ENCODE measurements at regions of chr1 and their contacts with region 1.

Region 1: GRCh38 chr1:112390775-112391602 is 5.0 kb upstream of the CTTNBP2NL start:
- DNase-seq: peak in 3 of 4 donors; percentile 86 to 94 (median 87)
- ATAC-seq: peak; percentile 91
- H3K4me3 ChIP-seq: peak overlapping the region; percentile 37 to 38
- H3K27ac ChIP-seq: peak overlapping the region; percentile 80 to 81
- H3K4me1 ChIP-seq: peaks cover 24 to 48% of the 10 kb centered on the region in 2 donors
- H3K27me3 ChIP-seq: no peaks in the 10 kb centered on the region
- CTCF ChIP-seq: peak; percentile 89 to 95

Region 2: DNA sequence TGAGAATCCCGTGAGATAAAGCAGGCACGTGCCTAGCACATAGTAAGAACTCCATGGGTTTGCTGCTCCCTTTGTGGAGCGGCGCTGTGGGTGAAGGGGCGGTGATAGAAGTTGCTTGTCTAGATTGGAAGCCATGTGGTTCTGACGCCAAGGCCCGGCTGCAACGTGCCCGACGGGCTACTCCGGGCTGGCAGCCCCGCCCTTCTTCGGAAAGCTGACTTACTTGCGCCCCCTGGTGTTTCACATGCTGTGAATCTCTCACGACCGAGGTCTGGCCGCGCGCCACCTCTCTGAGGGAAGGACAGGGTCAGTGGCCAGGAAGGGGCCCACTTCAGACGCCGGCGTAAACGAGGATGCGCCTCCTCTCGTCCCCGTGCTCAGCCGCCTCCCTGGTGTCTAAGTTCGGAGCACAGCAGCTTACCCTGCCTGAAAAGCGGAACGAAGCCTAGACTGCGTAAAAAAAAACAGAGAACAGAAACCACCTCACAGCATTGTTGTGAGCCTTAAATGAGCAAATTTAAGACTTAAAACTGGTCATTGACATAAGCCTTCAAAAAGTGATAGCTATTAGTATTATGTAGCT is 75.2 kb after region 1 on chr1:
- intact Hi-C with region 1: loop called (anchors 5 to 10 kb)
- DNase-seq: peak; percentile 93 to 97 (median 95)
- ATAC-seq: peak; percentile 85
- H3K4me3 ChIP-seq: peak overlapping the region in 1 of 2 donors; percentile 14
- H3K27ac ChIP-seq: peak overlapping the region; percentile 64 to 74
- H3K4me1 ChIP-seq: peaks cover 13 to 22% of the 10 kb centered on the region in 2 donors
- H3K27me3 ChIP-seq: no peaks in the 10 kb centered on the region
- CTCF ChIP-seq: peak; percentile 72 to 88

Region 3: GRCh38 chr1:112706908-112707663 is 316.1 kb after region 1 on chr1 and contains the start of gene RHOC:
- intact Hi-C with region 1: loop called in 1 of 2 experiments (anchors 10 kb)
- DNase-seq: peak; percentile 83 to 96 (median 90)
- ATAC-seq: peak; percentile 86
- H3K4me3 ChIP-seq: peak within 1 kb of the TSS; percentile 91 to 96
- H3K27ac ChIP-seq: peak within 1 kb of the TSS; percentile 87 to 93
- H3K4me1 ChIP-seq: peaks cover 30 to 46% of the 10 kb centered on the region in 2 donors
- H3K27me3 ChIP-seq: peaks cover 0 to 26% of the 10 kb centered on the region in 2 donors
- CTCF ChIP-seq: peak; percentile 88 to 91
- polyA plus RNA-seq, gene RHOC: 204 to 259 (median 210) TPM

Measured in left lung (tissue), 14 donors.